ENCODE measurements at regions of chr10 and their contacts with region 1.

Region 1: GRCh38 chr10:108544494-108545120 is 1378.7 kb downstream of the XPNPEP1 start:
- DNase-seq: peak; percentile 77
- ATAC-seq: peak; percentile 82
- H3K4me3 ChIP-seq: no peak overlapping the region
- H3K27ac ChIP-seq: no peak overlapping the region
- H3K4me1 ChIP-seq: no peaks in the 10 kb centered on the region
- H3K27me3 ChIP-seq: no peaks in the 10 kb centered on the region
- CTCF ChIP-seq: peak; percentile 68

Region 2: GRCh38 chr10:107409522-107409921 is 1135.1 kb before region 1 on chr10:
- CTCF ChIA-PET with region 1: no interaction called
- POLR2A ChIA-PET with region 1: no interaction called
- intact Hi-C with region 1: loop called (anchors 5 kb)
- DNase-seq: peak; percentile 49
- ATAC-seq: peak; percentile 67
- H3K4me3 ChIP-seq: no peak overlapping the region
- H3K27ac ChIP-seq: no peak overlapping the region
- H3K4me1 ChIP-seq: no peaks in the 10 kb centered on the region
- H3K27me3 ChIP-seq: no peaks in the 10 kb centered on the region
- CTCF ChIP-seq: peak; percentile 61

Region 3: DNA sequence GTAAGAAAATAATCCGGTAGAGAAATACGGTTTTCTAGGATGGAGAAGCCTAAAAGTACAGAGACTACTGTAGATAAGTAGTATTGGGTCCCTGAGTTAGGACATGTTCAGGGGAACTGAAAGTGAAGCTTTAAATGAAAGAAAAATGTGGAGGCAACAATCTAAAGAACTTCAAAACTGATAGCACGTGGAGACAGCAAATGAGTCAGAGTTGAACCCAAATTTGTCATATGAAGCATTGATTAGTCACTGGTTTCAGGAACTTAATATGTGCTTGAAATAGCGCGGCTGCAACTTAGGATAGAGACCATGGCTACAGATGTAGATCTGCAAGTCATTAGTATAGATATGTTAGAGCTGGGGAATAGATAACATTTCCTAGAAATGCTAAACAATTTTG is 241.5 kb before region 1 on chr10:
- CTCF ChIA-PET with region 1: no interaction called
- POLR2A ChIA-PET with region 1: no interaction called
- intact Hi-C with region 1: no loop called
- DNase-seq: peak; percentile 38
- ATAC-seq: no peak
- H3K4me3 ChIP-seq: no peak overlapping the region
- H3K27ac ChIP-seq: no peak overlapping the region
- H3K4me1 ChIP-seq: peaks cover 5% of the 10 kb centered on the region; the same call in 1 of the 2 replicates
- H3K27me3 ChIP-seq: no peaks in the 10 kb centered on the region
- CTCF ChIP-seq: no peak

Region 4: GRCh38 chr10:108358912-108359311 is 185.7 kb before region 1 on chr10:
- CTCF ChIA-PET with region 1: no interaction called
- POLR2A ChIA-PET with region 1: no interaction called
- intact Hi-C with region 1: loop called (anchors 2 kb)
- DNase-seq: peak; percentile 92
- ATAC-seq: peak; percentile 91
- H3K4me3 ChIP-seq: no peak overlapping the region
- H3K27ac ChIP-seq: peak overlapping the region; percentile 98
- H3K4me1 ChIP-seq: peaks cover 25% of the 10 kb centered on the region
- H3K27me3 ChIP-seq: no peaks in the 10 kb centered on the region
- CTCF ChIP-seq: peak; percentile 61

Region 5: GRCh38 chr10:108443636-108444035 is 101.0 kb before region 1 on chr10:
- CTCF ChIA-PET with region 1: no interaction called
- POLR2A ChIA-PET with region 1: no interaction called
- intact Hi-C with region 1: no loop called
- DNase-seq: no peak
- ATAC-seq: no peak
- H3K4me3 ChIP-seq: no peak overlapping the region
- H3K27ac ChIP-seq: no peak overlapping the region
- H3K4me1 ChIP-seq: no peaks in the 10 kb centered on the region
- H3K27me3 ChIP-seq: no peaks in the 10 kb centered on the region
- CTCF ChIP-seq: no peak

Region 6: DNA sequence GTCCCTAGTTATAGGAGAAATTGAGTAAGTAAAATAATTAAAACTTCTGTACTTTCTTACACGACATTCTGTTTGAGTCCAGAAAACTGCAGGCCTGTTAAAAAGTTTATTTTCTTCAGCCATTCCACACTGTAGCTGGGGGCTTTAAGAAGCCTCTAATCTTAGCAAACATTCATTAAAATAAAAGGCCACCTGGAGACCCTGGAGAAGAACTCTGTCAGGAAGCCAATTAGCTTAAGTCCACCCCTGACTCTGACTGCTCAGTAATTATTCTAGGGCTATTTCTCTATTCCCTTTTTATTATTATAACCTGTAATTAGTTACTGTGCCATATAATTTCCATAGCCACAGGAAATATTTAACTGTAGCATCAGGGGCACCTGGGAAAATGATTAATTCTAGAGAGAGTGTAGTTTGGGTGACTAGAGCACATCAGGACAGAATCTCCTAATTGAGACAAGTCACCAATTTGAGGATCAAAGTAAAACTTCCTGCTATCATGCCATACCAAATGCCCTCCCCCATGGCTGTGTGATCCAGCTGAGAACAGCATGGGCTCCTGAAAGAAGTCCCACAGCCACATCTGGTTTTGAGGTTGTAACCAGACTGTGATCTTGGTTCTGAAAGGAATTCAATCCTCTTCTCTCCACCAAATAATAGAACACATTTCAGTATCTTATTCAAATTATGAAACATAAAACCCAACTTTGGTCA is 76.4 kb after region 1 on chr10:
- CTCF ChIA-PET with region 1: no interaction called
- POLR2A ChIA-PET with region 1: no interaction called
- intact Hi-C with region 1: no loop called
- DNase-seq: no peak
- ATAC-seq: no peak
- H3K4me3 ChIP-seq: no peak overlapping the region
- H3K27ac ChIP-seq: no peak overlapping the region
- H3K4me1 ChIP-seq: no peaks in the 10 kb centered on the region
- H3K27me3 ChIP-seq: no peaks in the 10 kb centered on the region
- CTCF ChIP-seq: no peak

Region 7: GRCh38 chr10:108783897-108784296 is 239.3 kb after region 1 on chr10:
- CTCF ChIA-PET with region 1: no interaction called
- POLR2A ChIA-PET with region 1: no interaction called
- intact Hi-C with region 1: loop called (anchors 2 kb)
- DNase-seq: peak; percentile 80
- ATAC-seq: peak; percentile 73
- H3K4me3 ChIP-seq: no peak overlapping the region
- H3K27ac ChIP-seq: no peak overlapping the region
- H3K4me1 ChIP-seq: peaks cover 15% of the 10 kb centered on the region
- H3K27me3 ChIP-seq: no peaks in the 10 kb centered on the region
- CTCF ChIP-seq: peak; percentile 68

Region 8: DNA sequence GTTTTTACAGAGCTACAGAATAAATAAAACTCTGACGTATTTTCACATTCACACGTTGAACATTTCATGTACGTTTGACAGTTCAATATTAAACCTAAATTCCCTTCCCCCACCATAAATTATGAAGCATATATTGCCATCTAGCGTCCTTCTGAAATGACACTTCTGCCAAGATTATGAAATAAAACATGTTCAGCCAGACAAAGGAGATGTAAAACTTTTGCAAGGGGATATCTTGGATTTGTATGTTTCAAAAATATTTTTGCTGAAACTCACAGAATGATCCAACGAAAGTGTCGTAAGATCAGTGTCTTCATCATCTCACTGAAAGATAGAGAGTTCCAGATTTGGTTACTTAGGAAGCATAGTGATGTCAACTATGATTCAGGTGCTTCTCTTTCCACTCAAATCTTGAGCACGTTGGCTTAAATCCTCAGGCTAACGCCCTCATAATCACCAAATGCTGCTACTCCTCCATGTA is 474.4 kb after region 1 on chr10:
- CTCF ChIA-PET with region 1: no interaction called
- POLR2A ChIA-PET with region 1: no interaction called
- intact Hi-C with region 1: loop called (anchors 10 kb)
- DNase-seq: peak; percentile 63
- ATAC-seq: peak; percentile 31
- H3K4me3 ChIP-seq: no peak overlapping the region
- H3K27ac ChIP-seq: no peak overlapping the region
- H3K4me1 ChIP-seq: peaks cover 8% of the 10 kb centered on the region; the same call in 1 of the 2 replicates
- H3K27me3 ChIP-seq: no peaks in the 10 kb centered on the region
- CTCF ChIP-seq: peak; percentile 74